WTC11 (cell line): ENCODE measurements at regions of chr12 and their contacts with region 1.

Region 1: DNA sequence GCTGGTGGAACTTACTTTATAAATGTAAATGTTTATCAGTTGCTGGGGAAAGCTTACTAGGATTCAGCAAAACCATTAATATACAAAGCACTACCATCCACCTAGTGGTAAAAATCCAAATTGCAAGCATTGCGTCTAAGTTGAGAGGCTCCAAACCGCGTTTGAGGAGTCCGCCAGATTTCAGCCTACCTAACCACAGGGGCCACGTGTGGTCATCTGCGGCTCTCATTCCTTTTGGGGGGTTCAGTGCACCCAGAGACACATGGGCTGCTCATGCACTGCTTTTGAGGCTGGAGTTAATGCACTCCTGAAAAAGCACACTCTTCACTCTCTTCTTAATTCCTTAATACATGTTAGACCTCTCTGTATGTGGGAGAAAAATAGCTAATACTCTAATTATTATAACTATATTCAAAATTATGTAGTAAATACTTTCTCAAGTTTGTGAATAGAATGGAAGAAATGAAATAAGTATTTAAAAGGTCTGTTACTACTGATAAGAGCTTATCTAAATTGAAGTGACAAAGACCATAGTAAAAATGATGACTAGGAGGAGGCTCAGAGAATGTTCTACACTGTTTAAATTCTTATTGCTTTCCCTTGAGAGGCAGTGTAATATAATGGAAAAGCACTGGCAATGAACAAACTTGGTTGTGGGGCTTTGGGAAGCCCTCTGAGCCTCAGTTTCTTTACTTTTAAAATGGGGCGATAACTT is 41.4 kb upstream of the MANSC4 start:
- DNase-seq: peak; percentile 44
- ATAC-seq: peak; percentile 90
- H3K4me3 Mint-ChIP-seq: no peak overlapping the region
- H3K27ac Mint-ChIP-seq: no peak overlapping the region
- H3K4me1 Mint-ChIP-seq: peaks cover 5% of the 10 kb centered on the region
- H3K27me3 Mint-ChIP-seq: peaks cover 3% of the 10 kb centered on the region; the same call in 1 of the 2 replicates
- CTCF ChIP-seq: peak; percentile 74

Region 2: DNA sequence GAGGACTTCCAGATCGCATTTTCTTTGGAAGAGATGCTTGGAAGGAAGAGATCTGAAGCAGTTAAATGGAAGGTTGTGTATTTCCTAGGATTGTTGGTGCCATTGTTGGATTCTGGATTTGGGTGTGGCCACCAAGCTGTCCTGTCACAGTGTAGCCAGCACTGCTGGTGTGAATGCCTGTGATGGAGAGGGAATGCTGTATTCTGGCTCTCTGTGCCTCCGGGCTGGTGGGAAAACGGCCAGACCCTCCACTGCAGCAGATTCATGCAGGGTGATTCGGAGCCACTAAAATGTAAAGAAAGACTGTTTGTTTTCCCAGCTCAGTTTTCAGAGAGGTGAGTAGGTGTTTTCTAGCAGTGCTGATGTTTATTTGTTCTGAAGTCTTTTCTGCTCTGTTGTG is 10.7 kb before region 1 on chr12:
- CTCF ChIA-PET with region 1: interaction called, 12 read pairs
- POLR2A ChIA-PET with region 1: no interaction called
- DNase-seq: no peak
- ATAC-seq: no peak
- H3K4me3 Mint-ChIP-seq: no peak overlapping the region
- H3K27ac Mint-ChIP-seq: no peak overlapping the region
- H3K4me1 Mint-ChIP-seq: peaks cover 9% of the 10 kb centered on the region
- H3K27me3 Mint-ChIP-seq: no peaks in the 10 kb centered on the region; the same call in 1 of the 2 replicates
- CTCF ChIP-seq: no peak